Right cardiac atrium (tissue), 5 donors: ENCODE measurements at regions of chr3 and their contacts with region 1.

Region 1: DNA sequence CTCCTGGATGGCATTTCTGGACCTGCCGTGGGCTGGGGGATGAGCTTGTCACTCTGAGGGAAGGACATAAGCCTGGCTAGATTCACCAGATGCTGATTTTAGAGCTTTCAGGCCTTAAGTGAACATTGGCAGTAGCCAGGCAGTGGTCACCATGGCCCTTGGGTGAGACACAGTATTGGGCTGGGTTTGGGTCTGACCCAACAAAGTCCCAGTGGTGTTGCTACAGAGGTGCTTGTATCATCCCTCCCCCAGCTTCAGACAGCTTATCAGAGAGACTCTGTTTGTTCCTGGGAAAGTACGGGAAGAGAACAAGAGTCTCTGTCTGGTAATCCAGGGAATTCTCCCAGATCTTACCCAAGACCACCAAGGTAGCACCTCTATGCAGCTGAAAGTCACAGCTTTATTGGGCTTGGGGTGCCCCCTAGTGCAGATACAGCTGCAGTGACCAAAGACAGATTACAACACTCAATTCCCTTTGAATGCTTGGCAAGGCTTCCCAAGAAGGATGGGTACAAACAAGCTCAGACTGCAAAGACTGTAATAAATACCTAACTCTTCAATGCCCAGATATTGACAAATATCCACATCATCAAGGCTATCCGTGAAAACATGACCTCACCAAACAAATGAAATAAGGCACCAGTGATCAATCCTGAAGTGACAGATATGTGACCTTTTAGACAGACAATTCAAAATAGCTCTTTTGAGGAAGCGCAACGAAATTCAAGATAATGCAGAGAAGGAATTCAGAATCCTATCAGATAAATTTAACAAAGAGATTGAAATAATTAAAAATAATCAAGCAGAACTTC is 9.9 kb upstream of the RUVBL1 start:
- DNase-seq: peak in 1 of 3 donors; percentile 22
- ATAC-seq: peak; percentile 64 to 80
- H3K4me3 ChIP-seq: no peak overlapping the region
- H3K27ac ChIP-seq: no peak overlapping the region
- H3K4me1 ChIP-seq: no peaks in the 10 kb centered on the region
- H3K27me3 ChIP-seq: no peaks in the 10 kb centered on the region

Region 2: GRCh38 chr3:128075516-128076482 is 57.7 kb before region 1 on chr3:
- intact Hi-C with region 1: loop called in 3 of 4 experiments (anchors 5 to 10 kb)
- DNase-seq: peak; percentile 90 to 97 (median 97)
- ATAC-seq: peak; percentile 84 to 89
- H3K4me3 ChIP-seq: peak overlapping the region; percentile 43
- H3K27ac ChIP-seq: peak overlapping the region; percentile 60
- H3K4me1 ChIP-seq: peaks cover 6% of the 10 kb centered on the region
- H3K27me3 ChIP-seq: no peaks in the 10 kb centered on the region

Region 3: GRCh38 chr3:128095222-128095703 is 38.2 kb before region 1 on chr3:
- intact Hi-C with region 1: loop called in 2 of 4 experiments (anchors 2 to 5 kb)
- DNase-seq: peak; percentile 83 to 93 (median 91)
- ATAC-seq: peak; percentile 94 to 96
- H3K4me3 ChIP-seq: no peak overlapping the region
- H3K27ac ChIP-seq: no peak overlapping the region
- H3K4me1 ChIP-seq: no peaks in the 10 kb centered on the region
- H3K27me3 ChIP-seq: no peaks in the 10 kb centered on the region